ENCODE measurements at regions of chr15 and their contacts with region 1.

Region 1: DNA sequence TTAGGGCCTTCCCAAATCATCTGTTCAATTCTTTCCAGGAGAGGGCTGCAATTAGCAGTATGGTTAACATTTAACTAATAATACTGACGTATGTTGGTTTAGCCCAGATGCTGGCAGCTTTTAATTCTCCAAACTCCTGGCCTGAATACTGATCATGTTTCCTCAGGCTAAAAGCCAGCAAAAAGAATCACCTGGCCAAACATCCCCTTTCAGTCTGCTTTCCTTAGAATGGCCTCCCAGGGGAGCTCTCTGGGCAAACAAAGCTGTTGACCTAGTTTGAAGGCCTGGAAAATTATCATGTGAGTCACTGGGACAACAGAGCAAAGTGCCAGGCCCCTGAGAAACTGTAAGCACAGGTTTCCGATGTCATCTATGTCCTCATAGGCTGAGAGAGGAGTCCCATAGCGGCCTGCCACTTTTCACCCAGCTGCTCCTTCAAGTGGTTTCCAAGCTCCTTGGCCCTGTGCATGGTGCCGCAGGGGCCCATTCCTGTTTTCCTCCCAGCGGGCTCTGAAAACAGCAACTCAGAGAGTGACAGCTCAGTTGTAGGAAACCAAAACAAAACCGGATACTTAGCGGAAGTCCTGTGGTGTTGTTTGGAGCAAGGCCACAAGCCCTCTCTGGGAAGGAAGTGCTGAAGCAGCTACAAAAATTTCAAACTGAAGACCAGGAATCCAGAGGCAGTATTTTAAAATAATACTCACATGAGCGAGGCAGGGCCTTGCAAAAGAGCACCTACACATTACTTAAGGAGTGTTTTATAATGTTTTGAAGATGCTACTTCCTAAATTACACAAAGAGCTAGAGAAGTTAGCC is 36.5 kb upstream of the RAB11A start:
- DNase-seq: peak; percentile 27 to 69 (median 63)
- ATAC-seq: peak; percentile 67
- H3K4me3 ChIP-seq: peak overlapping the region; percentile 19
- H3K4me3 Mint-ChIP-seq: peak overlapping the region; percentile 73 to 87 (median 83)
- H3K27ac ChIP-seq: peak overlapping the region; percentile 68
- H3K27ac Mint-ChIP-seq: peak overlapping the region; percentile 87 to 99 (median 95)
- H3K4me1 ChIP-seq: peaks cover 42 to 50% of the 10 kb centered on the region in 2 donors
- H3K4me1 Mint-ChIP-seq: peaks cover 31 to 70% (median 59%) of the 10 kb centered on the region in 7 donors
- H3K27me3 ChIP-seq: no peaks in the 10 kb centered on the region
- H3K27me3 Mint-ChIP-seq: no peaks in the 10 kb centered on the region

Region 2: GRCh38 chr15:65610871-65611718 is 221.7 kb before region 1 on chr15 and contains the start of gene INTS14:
- CTCF ChIA-PET with region 1: no interaction called
- POLR2A ChIA-PET with region 1: no interaction called
- intact Hi-C with region 1: loop called in 1 of 2 experiments (anchors 2 kb)
- DNase-seq: peak; percentile 74 to 96 (median 80)
- ATAC-seq: peak; percentile 99
- H3K4me3 ChIP-seq: peak within 1 kb of the TSS; percentile 97
- H3K4me3 Mint-ChIP-seq: peak within 1 kb of the TSS; percentile 95 to 99 (median 98)
- H3K27ac ChIP-seq: peak within 1 kb of the TSS; percentile 89
- H3K27ac Mint-ChIP-seq: peak within 1 kb of the TSS; percentile 97 to 100 (median 98)
- H3K4me1 ChIP-seq: peaks cover 18 to 21% of the 10 kb centered on the region in 2 donors
- H3K4me1 Mint-ChIP-seq: peaks cover 11 to 44% (median 32%) of the 10 kb centered on the region in 7 donors
- H3K27me3 ChIP-seq: no peaks in the 10 kb centered on the region
- H3K27me3 Mint-ChIP-seq: no peaks in the 10 kb centered on the region
- total RNA-seq, gene INTS14: 19.1 to 38.3 (median 35.9) TPM

Region 3: DNA sequence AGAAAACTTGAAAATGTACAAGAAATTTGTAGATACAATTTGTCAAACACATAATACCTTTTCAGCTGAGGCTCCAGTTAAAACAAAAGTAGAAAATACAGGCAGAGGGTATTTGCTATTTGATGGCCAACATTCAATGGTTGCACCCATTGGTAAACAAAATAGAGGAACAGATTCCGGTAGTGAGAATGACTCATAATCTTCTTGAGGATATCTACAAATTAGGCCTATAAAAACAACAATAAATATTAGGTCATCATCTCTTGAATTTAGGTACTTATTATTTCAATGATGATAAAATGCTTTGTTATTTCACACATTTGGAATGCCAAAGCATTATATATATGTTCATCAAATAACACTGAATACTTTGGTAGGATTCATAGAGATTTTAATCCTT is 94.1 kb before region 1 on chr15:
- CTCF ChIA-PET with region 1: interaction called, 3 read pairs
- POLR2A ChIA-PET with region 1: interaction called, 3 read pairs
- intact Hi-C with region 1: loop called in 1 of 2 experiments (anchors 2 kb)
- DNase-seq: no peak
- ATAC-seq: no peak
- H3K4me3 ChIP-seq: no peak overlapping the region
- H3K4me3 Mint-ChIP-seq: no peak overlapping the region
- H3K27ac ChIP-seq: no peak overlapping the region
- H3K27ac Mint-ChIP-seq: no peak overlapping the region
- H3K4me1 ChIP-seq: no peaks in the 10 kb centered on the region
- H3K4me1 Mint-ChIP-seq: peaks cover 0 to 4% (median 0%) of the 10 kb centered on the region in 7 donors
- H3K27me3 ChIP-seq: no peaks in the 10 kb centered on the region
- H3K27me3 Mint-ChIP-seq: no peaks in the 10 kb centered on the region

Region 4: DNA sequence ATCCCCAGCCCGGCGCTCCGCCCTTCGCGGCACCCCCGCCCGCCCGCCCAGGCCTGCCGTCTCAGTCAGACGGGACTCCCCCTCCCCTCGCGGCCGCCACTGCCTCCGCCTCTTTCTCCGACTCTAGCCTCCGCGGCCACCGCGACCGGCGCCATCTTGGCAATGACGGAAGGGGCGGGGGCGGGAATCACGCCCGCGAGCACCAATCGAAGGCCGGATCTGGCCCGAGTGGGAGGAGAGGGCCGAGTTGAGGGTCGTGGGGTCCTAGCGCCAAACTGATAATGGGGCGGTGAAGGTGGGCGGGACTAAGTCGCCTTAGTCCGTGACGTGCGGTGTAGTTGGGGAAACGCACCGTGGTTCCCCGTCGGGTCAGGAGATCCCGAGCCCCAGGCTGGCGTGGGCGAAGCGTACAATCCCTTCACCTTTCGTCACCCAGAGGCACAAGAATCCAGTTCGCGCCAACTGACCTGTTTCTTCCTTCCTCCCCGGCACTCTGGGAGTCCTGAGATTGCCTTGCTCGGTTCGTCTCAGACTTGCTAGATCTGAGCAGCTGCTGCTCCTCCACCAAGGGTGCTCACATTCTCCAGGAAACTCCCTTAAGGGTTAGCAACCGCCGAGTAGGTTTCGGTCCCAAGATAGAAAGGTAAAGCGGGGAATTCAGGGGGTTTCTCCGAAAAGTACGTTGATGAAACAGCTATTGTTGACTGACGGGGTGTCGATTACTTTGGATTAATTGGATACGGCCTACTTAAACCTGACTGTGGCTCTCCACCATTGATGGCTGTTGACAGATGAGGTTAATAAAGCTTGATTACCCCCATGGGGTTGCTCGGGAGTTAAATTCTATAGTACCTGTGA is 40.4 kb before region 1 on chr15 and contains the start of gene DENND4A:
- CTCF ChIA-PET with region 1: interaction called, 9 read pairs
- POLR2A ChIA-PET with region 1: interaction called, 67 read pairs
- intact Hi-C with region 1: loop called (anchors 1 kb)
- DNase-seq: peak; percentile 95 to 99 (median 98)
- ATAC-seq: peak; percentile 91
- H3K4me3 ChIP-seq: peak within 1 kb of the TSS; percentile 91
- H3K4me3 Mint-ChIP-seq: peak within 1 kb of the TSS; percentile 89 to 99 (median 93)
- H3K27ac ChIP-seq: peak within 1 kb of the TSS; percentile 99
- H3K27ac Mint-ChIP-seq: peak within 1 kb of the TSS; percentile 94 to 100 (median 98)
- H3K4me1 ChIP-seq: peaks cover 24 to 33% of the 10 kb centered on the region in 2 donors
- H3K4me1 Mint-ChIP-seq: peaks cover 18 to 66% (median 49%) of the 10 kb centered on the region in 7 donors
- H3K27me3 ChIP-seq: no peaks in the 10 kb centered on the region
- H3K27me3 Mint-ChIP-seq: no peaks in the 10 kb centered on the region
- total RNA-seq, gene DENND4A: 40.0 to 67.9 (median 64.6) TPM

Region 5: GRCh38 chr15:65818927-65819562 is 13.7 kb before region 1 on chr15:
- CTCF ChIA-PET with region 1: interaction called, 11 read pairs
- POLR2A ChIA-PET with region 1: interaction called, 16 read pairs
- intact Hi-C with region 1: loop called (anchors 1 kb)
- DNase-seq: peak in 7 of 9 donors; percentile 75 to 95 (median 90)
- ATAC-seq: peak; percentile 95
- H3K4me3 ChIP-seq: peak overlapping the region; percentile 9
- H3K4me3 Mint-ChIP-seq: peak overlapping the region; percentile 21 to 83 (median 76)
- H3K27ac ChIP-seq: peak overlapping the region; percentile 91
- H3K27ac Mint-ChIP-seq: peak overlapping the region; percentile 93 to 100 (median 98)
- H3K4me1 ChIP-seq: peaks cover 23 to 39% of the 10 kb centered on the region in 2 donors
- H3K4me1 Mint-ChIP-seq: peaks cover 33 to 69% (median 52%) of the 10 kb centered on the region in 7 donors
- H3K27me3 ChIP-seq: no peaks in the 10 kb centered on the region
- H3K27me3 Mint-ChIP-seq: no peaks in the 10 kb centered on the region

Measured in naive thymus-derived CD4-positive, alpha-beta T cell (primary cell).